Activated CD4-positive, alpha-beta memory T cell treated with anti-CD3 and anti-CD28 coated beads for 36 hours (primary cell): ENCODE measurements at regions of chr16 and their contacts with region 1.

Region 1: DNA sequence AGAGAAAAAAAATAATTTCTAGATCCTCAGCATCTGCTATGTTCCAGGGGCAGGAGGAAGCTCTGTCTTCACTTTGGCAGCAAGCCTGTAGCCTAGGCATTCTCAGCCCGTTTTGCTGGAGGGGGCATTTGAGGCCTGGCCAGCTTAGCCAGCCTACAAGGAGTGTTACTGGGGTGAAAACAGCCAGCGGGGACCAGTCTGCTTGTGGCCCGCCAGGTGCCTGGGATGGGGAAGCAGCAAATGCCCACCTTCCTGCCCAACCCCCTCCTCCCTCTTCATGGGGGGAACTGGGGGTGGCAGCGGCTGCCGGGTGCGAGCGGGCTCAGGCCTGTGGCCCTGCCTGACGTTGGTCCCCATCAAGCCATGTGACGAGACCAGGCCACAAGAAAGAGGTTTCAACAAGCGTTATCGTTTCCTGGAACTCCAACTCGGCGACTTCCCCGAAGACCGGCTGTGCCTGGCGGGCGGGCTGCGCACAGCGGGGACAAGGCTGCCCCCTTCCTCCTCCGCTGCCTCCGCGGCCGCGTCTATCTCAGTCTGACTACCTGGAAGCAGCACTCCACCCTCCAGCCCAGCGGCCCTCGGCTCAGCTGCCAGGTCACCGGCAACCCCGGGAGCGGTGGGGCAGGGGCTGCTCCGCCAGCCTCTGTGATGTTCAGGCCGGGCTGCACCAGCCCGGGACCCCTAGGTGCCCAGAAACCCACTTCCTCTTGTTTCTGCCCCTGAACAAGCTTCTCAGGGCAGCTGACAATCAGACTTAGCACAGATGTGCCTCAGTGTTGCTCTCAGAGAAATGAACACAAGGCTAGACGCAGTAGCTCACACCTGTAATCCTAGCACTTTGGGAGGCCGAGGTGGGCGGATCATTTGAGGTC is 22.9 kb downstream of the SOCS1 start:
- DNase-seq: peak; percentile 97
- H3K4me3 Mint-ChIP-seq: peak overlapping the region; percentile 62
- H3K27ac Mint-ChIP-seq: peak overlapping the region; percentile 99
- H3K4me1 Mint-ChIP-seq: peaks cover 74% of the 10 kb centered on the region
- H3K27me3 Mint-ChIP-seq: no peaks in the 10 kb centered on the region

Region 2: GRCh38 chr16:11164482-11165270 is 68.4 kb before region 1 on chr16:
- CTCF ChIA-PET with region 1: no interaction called
- POLR2A ChIA-PET with region 1: interaction called, 11 read pairs
- intact Hi-C with region 1: loop called (anchors 2 kb)
- DNase-seq: no peak
- H3K4me3 Mint-ChIP-seq: no peak overlapping the region
- H3K27ac Mint-ChIP-seq: peak overlapping the region; percentile 24
- H3K4me1 Mint-ChIP-seq: peaks cover 26% of the 10 kb centered on the region
- H3K27me3 Mint-ChIP-seq: no peaks in the 10 kb centered on the region

Region 3: GRCh38 chr16:11248133-11248532 is 15.0 kb after region 1 on chr16:
- CTCF ChIA-PET with region 1: interaction called, 9 read pairs
- POLR2A ChIA-PET with region 1: interaction called, 47 read pairs
- intact Hi-C with region 1: loop called (anchors 1 kb)
- DNase-seq: peak; percentile 65
- H3K4me3 Mint-ChIP-seq: no peak overlapping the region
- H3K27ac Mint-ChIP-seq: peak overlapping the region; percentile 93
- H3K4me1 Mint-ChIP-seq: peaks cover 64% of the 10 kb centered on the region
- H3K27me3 Mint-ChIP-seq: peaks cover 2% of the 10 kb centered on the region